Heart right ventricle (tissue), 16 donors: ENCODE measurements at regions of chr22 and their contacts with region 1.

Region 1: DNA sequence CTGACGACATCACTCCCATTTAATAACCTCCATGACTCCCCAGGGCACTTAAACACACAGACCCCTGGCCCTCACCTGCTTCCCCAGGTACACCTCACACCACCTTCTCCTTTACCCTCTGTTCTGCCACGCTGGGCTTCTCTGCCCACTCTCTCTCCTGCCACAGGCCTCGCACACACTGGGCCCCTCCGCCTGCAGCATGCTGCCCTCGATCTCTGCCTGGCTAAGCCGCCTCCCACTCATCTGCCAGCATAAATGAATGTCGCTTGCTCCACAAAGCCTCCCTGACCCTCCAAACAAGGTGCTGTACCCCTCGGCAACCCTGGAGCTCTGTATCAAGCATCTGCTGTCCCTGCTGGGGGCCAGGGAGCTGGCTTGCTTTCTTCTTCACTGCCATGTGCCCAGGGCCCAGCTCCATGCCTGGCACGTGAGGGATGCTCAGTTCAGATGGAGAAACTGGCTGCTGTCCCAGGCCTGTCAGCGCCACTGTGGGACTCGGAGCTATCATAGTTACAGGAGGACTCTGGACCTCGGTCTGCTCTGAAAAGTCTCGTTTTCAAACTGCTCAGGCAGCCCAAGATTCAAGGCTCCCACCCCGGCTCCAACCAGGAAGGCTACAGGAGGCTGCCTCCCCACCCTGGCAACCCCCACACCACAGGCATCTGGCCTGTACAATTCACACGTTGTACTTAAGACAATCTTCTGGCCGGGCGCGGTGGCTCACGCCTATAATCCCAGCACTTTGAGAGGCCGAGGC is 11.9 kb downstream of the TTLL1 start:
- DNase-seq: peak; percentile 34 to 43
- ATAC-seq: peak; percentile 46 to 93 (median 85)
- H3K4me3 ChIP-seq: no peak overlapping the region
- H3K27ac ChIP-seq: peak overlapping the region in 4 of 10 donors; percentile 10 to 50 (median 16)
- H3K4me1 ChIP-seq: peaks cover 0 to 11% (median 3%) of the 10 kb centered on the region in 9 donors
- H3K27me3 ChIP-seq: no peaks in the 10 kb centered on the region
- CTCF ChIP-seq: no peak

Region 2: DNA sequence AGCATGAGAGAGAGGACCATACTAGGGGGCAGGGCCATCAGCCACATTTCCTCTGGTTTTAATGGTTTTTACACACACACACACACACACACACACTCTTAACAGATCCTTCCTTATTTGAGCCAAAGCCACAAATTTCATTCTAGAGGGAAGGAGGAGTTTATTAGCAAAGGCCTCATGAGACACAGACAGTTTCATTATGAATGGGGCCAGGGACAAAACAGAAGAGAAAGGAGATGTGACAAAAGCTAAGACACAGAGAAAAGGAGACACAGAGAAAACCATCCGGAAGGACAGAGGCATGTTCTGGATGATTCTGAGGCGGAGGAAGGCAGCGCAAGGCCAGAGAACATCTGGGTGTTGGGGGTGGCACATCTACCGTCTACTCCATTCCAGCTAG is 188.0 kb before region 1 on chr22:
- intact Hi-C with region 1: no loop called
- DNase-seq: no peak
- ATAC-seq: peak in 3 of 8 donors; percentile 7 to 21 (median 20)
- H3K4me3 ChIP-seq: peak overlapping the region in 1 of 10 donors; percentile 26
- H3K27ac ChIP-seq: peak overlapping the region in 1 of 10 donors; percentile 91
- H3K4me1 ChIP-seq: peaks cover 9 to 59% (median 34%) of the 10 kb centered on the region in 9 donors
- H3K27me3 ChIP-seq: no peaks in the 10 kb centered on the region
- CTCF ChIP-seq: no peak

Region 3: DNA sequence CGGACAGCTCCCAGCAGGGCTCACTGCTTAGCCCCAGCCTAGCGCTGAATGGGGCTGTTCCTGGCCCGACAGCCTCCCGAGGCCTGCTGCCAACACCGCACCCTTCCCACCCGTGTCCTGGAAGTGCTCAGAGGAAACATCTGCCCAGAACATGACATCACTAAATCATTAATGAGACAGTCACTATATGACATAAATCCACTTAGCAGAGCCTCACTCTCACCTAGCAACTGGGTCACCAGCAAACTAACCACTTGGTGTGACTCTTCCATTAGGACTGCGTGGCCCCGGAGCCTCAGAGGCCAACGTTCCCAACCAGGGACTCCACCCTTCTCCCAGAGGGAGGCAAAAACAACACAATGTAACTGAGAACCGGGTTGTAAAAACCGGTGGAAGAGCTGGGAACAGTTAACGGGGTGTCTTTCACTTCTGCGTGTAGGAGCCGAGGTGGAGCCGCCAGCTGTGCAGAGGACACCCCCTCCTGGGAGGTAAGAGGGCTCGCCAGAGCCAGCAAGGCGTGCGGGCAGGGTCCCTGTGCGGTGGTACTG is 40.9 kb before region 1 on chr22:
- intact Hi-C with region 1: loop called in 1 of 10 experiments (anchors 2 kb)
- DNase-seq: peak; percentile 75
- ATAC-seq: peak; percentile 83 to 96 (median 93)
- H3K4me3 ChIP-seq: peak overlapping the region in 2 of 10 donors; percentile 13 to 20
- H3K27ac ChIP-seq: peak overlapping the region in 6 of 10 donors; percentile 25 to 60 (median 44)
- H3K4me1 ChIP-seq: peaks cover 0 to 24% (median 7%) of the 10 kb centered on the region in 9 donors
- H3K27me3 ChIP-seq: no peaks in the 10 kb centered on the region
- CTCF ChIP-seq: no peak

Region 4: DNA sequence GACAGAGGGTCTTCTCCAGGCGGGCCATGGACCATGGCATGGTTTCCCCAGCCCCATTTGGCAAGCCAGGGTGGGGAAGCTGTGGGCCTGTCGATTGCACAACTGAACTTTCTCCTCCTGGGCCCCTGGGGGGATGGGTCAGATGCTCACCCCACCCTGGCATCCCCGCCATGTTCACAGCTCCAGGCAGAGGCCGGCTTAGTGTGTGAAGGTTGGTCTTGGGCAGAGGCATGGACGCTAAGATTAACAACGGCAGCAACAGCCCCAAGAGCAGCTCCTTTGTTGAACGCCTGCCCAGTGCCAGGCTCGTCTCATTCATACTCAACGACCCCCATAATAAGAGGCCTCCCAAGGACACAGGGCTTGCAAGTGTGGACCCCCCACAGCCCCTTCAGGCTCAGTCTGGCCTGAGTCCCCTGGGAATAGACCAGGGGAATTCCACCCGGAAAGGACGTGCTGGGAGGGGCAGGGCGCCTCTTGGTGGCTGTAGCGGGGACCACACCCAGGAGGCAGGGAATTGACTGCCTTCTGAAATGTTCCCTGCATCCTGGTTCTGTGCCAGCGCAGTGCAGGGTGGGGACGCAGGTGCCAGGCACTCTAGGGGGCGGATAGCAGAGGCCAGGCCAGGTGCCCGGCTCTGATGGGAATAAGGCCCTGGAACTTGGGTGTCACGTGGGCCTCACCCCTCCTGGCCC is 82.3 kb after region 1 on chr22:
- intact Hi-C with region 1: no loop called
- DNase-seq: no peak
- ATAC-seq: peak in 2 of 8 donors; percentile 9 to 22
- H3K4me3 ChIP-seq: no peak overlapping the region
- H3K27ac ChIP-seq: no peak overlapping the region
- H3K4me1 ChIP-seq: peaks cover 6 to 53% (median 24%) of the 10 kb centered on the region in 9 donors
- H3K27me3 ChIP-seq: no peaks in the 10 kb centered on the region
- CTCF ChIP-seq: peak in 5 of 9 donors; percentile 12 to 28 (median 20)